ENCODE measurements at regions of chr16 and their contacts with region 1.

Region 1: DNA sequence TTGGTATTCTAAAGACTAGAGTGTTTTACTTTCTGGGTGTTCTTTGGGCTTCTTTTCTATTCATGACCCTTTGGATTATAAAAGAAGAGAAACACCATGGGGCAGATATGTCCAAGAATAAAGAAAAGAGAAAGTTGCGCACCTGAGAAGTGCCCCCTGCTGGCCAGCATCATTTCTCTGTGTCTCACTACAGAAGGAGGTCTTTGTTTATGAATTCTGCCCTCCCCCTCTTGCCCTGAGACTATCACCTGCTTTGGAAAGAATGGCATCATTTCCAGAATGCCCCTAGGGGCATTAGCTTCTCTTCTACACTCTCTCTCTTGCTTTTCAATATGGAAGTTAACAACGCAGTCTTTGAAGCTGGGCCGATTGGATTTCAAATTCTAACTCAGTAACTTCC is 45.0 kb downstream of the CDH13 start:
- DNase-seq: no peak
- H3K4me3 Mint-ChIP-seq: no peak overlapping the region
- H3K27ac Mint-ChIP-seq: no peak overlapping the region
- H3K4me1 Mint-ChIP-seq: peaks cover 14% of the 10 kb centered on the region
- H3K27me3 Mint-ChIP-seq: peaks cover 17% of the 10 kb centered on the region

Region 2: DNA sequence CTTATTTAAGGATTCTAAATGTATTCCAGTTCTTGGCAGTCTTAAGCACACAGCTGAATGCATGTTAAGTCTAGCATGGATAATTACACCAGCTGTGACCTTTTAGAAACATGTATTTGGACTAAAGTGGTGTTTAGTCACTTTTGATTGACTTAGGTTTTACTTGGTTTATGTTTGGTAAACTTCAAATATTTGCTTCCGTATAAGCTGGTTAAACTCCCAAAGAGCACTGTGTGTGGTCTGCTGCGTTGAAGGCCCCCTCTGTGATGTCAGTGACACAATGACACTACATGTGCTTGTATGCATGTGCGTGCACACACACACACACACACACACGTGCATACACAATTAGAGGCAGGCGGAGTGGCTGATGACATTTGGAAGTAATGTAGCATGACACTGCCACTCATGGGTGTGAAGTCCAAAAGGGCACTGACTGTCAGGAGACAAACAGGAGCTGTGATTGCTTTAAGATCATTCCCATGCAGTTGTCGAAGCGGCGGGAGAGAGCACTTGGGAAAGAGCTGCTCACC is 201.1 kb before region 1 on chr16:
- intact Hi-C with region 1: no loop called
- DNase-seq: no peak
- H3K4me3 Mint-ChIP-seq: no peak overlapping the region
- H3K27ac Mint-ChIP-seq: no peak overlapping the region
- H3K4me1 Mint-ChIP-seq: no peaks in the 10 kb centered on the region
- H3K27me3 Mint-ChIP-seq: peaks cover 3% of the 10 kb centered on the region

Region 3: DNA sequence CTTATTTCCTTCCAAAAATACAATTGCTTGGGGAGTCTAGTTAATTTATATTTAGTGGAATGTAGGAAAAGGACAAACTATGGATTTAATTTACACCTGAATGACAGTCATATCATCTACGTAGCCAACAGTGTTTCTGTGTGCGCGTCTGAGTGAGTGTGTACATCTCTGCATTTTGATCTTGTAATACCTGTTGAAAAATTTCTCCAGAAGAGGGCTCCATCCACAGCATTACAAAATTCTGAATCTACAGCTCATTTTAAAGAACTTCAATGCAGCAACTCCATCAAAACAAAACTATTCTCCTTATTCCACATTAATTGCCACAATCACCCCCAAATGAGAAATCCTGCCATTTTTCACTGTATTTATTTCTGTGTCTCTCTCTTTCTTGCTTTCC is 41.1 kb before region 1 on chr16:
- intact Hi-C with region 1: loop called (anchors 1 kb)
- DNase-seq: no peak
- H3K4me3 Mint-ChIP-seq: no peak overlapping the region
- H3K27ac Mint-ChIP-seq: no peak overlapping the region
- H3K4me1 Mint-ChIP-seq: peaks cover 17% of the 10 kb centered on the region
- H3K27me3 Mint-ChIP-seq: peaks cover 54% of the 10 kb centered on the region

Region 4: DNA sequence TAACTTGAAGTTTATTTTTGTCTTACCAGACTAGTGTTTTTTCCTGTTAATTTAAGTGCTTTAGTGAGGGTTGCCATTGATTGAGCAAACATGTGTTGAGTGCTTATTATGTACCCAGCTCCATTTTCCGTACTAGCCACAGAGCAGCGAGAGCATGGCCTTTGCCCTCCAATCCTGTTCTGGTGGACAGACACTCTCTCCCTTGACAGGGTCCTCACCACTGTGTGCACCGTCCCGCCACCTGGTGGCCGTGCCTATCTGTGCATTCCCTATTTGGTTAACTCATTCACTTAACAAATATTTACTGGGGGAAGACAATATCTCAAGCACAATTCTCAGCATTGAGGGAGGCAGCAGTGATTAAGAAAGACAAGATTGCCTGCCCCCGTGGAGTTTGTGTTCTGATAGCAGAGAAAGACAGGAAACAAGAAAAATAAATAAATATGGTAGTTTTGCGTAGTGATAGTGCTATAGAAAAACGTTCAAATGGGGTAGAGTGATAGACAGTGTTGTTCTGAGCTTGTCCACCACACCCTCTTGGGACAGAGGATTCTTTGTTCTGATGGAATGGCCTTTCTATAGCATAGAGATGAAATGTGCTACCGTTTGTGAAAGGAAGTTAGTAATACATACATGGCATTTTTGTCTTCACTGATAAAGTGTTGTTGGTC is 31.9 kb before region 1 on chr16:
- intact Hi-C with region 1: loop called (anchors 1 kb)
- DNase-seq: peak; percentile 37
- H3K4me3 Mint-ChIP-seq: no peak overlapping the region
- H3K27ac Mint-ChIP-seq: no peak overlapping the region
- H3K4me1 Mint-ChIP-seq: peaks cover 40% of the 10 kb centered on the region
- H3K27me3 Mint-ChIP-seq: no peaks in the 10 kb centered on the region

Region 5: DNA sequence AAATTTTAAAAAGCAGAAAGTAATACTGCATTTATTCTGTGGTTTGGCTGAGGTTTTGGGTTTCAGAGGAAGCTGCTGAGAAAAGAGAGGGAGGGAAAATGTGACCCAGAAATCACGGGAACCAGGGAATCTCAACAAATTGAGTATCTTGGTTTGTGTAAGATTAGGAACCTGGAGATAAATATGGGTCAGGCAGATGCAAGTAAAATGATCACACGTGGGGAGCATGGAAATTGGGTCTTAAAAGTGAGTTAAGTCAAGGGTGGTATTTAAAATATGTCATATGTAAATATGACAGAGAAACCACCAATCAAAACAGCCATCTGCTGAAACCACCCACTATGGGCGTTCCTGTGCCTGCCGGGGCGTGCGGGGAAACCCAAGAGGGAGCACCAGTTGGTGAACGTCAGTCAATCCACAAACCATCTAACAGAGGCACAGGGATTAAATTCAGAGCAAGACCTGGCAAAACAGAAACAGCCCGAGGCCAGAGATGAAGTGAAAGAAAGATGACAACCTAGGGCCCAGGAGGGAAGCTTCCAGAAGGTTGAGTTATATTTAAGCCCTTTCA is 11.6 kb before region 1 on chr16:
- intact Hi-C with region 1: loop called (anchors 1 kb)
- DNase-seq: no peak
- H3K4me3 Mint-ChIP-seq: peak overlapping the region; percentile 42
- H3K27ac Mint-ChIP-seq: no peak overlapping the region
- H3K4me1 Mint-ChIP-seq: peaks cover 50% of the 10 kb centered on the region
- H3K27me3 Mint-ChIP-seq: peaks cover 7% of the 10 kb centered on the region